H1 (cell line): ENCODE measurements at regions of chr12 and their contacts with region 1.

Region 1: DNA sequence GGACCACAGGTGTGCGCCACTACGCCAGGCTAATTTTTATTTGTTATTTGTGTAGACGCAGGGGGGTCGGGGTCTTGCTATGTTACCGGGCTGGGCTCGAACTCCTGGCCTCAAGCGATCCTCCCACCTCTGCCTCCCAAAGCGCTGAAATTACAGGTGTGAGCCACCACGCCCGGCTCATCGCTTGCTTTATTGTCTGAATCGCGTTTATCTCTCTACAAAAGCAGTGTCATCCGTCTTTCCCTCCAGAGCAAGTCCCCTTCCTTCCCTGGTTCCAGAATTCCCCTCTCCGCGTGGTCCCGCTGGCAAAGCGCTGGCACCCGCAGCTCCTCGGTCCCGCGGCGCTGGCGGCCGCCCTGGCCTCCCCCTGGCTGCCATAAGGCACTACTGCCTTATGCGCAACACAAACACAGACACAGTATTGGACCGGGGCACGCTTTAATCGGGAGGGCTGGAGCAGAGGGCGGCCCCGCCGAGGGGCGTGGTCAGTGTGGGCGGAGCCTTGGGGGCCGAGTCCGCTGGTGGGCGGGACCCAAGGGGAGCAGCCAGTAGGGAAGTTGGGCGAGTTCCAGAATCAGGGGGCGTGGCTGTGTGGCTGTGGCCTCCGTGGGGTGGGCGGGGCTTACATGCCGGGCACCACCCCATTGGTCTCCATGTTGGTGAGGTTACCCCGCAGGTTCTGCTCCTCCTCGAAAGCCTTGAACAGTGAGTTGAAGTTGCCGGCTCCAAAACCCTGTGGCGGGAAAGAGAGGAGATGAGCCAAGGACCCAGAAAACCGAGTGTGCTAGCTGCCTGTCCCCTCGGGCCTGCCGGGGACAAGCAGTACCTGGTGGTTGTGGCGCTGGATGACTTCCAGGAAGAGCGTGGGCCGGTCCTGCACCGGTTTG is 19.3 kb downstream of the HPD start:
- DNase-seq: peak; percentile 96 to 100
- H3K4me3 ChIP-seq: peak overlapping the region; percentile 65 to 87 (median 75)
- H3K27ac ChIP-seq: peak overlapping the region; percentile 75; the same call in 1 of the 2 replicates
- H3K4me1 ChIP-seq: no peaks in the 10 kb centered on the region; a peak in 2 of 7 replicates
- H3K27me3 ChIP-seq: no peaks in the 10 kb centered on the region
- CTCF ChIP-seq: peak; percentile 29 to 48 (median 40)
- EP300 ChIP-seq: no peak
- POLR2A ChIP-seq: peak; percentile 59 to 75
- RAD21 ChIP-seq: peak in 1 of 2 experiments; percentile 24; a peak in 1 of 4 replicates

Region 2: GRCh38 chr12:121476477-121476876 is 362.9 kb before region 1 on chr12:
- CTCF ChIA-PET with region 1: no interaction called
- POLR2A ChIA-PET with region 1: no interaction called
- DNase-seq: no peak
- H3K4me3 ChIP-seq: no peak overlapping the region
- H3K27ac ChIP-seq: no peak overlapping the region
- H3K4me1 ChIP-seq: peaks cover 0 to 3% (median 2%) of the 10 kb centered on the region in 4 experiments; a peak in 1 of 7 replicates
- H3K27me3 ChIP-seq: no peaks in the 10 kb centered on the region
- CTCF ChIP-seq: no peak
- EP300 ChIP-seq: no peak
- POLR2A ChIP-seq: no peak
- RAD21 ChIP-seq: no peak

Region 3: GRCh38 chr12:121802846-121803630 is 36.3 kb before region 1 on chr12:
- CTCF ChIA-PET with region 1: interaction called, 111 read pairs
- POLR2A ChIA-PET with region 1: interaction called, 51 read pairs
- DNase-seq: peak; percentile 70 to 88
- H3K4me3 ChIP-seq: peak overlapping the region; percentile 70 to 88 (median 81)
- H3K27ac ChIP-seq: peak overlapping the region; percentile 97
- H3K4me1 ChIP-seq: peaks cover 12 to 28% (median 21%) of the 10 kb centered on the region in 4 experiments
- H3K27me3 ChIP-seq: no peaks in the 10 kb centered on the region
- CTCF ChIP-seq: no peak
- EP300 ChIP-seq: no peak
- POLR2A ChIP-seq: peak in 1 of 2 experiments; percentile 97; a peak in 2 of 3 replicates
- RAD21 ChIP-seq: no peak

Region 4: DNA sequence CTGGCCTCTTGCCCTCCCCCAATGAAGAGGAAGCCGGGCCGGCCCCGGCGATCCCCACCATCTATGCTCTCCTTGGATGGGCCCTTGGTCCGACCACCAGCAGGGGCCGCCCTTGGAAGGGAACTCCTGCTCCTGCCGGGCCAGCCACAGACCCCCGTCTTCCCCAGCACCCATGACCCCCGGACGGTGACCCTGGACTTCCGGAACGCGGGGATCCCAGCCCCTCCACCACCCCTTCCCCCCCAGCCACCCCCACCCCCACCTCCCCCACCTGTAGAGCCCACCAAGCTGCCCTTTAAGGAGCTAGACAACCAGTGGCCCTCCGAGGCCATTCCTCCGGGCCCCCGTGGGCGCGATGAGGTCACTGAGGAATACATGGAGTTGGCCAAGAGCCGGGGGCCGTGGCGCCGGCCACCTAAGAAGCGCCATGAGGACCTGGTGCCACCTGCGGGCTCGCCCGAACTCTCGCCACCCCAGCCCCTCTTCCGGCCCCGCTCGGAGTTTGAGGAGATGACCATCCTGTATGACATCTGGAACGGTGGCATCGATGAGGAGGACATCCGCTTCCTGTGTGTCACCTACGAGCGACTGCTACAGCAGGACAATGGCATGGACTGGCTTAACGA is 16.1 kb before region 1 on chr12:
- CTCF ChIA-PET with region 1: interaction called, 12 read pairs
- POLR2A ChIA-PET with region 1: interaction called, 22 read pairs
- DNase-seq: no peak
- H3K4me3 ChIP-seq: no peak overlapping the region
- H3K27ac ChIP-seq: no peak overlapping the region
- H3K4me1 ChIP-seq: no peaks in the 10 kb centered on the region
- H3K27me3 ChIP-seq: no peaks in the 10 kb centered on the region
- CTCF ChIP-seq: peak; percentile 28 to 54 (median 37); a peak in 3 of 4 replicates
- EP300 ChIP-seq: no peak
- POLR2A ChIP-seq: no peak
- RAD21 ChIP-seq: peak; percentile 36 to 45; a peak in 3 of 4 replicates

Region 5: DNA sequence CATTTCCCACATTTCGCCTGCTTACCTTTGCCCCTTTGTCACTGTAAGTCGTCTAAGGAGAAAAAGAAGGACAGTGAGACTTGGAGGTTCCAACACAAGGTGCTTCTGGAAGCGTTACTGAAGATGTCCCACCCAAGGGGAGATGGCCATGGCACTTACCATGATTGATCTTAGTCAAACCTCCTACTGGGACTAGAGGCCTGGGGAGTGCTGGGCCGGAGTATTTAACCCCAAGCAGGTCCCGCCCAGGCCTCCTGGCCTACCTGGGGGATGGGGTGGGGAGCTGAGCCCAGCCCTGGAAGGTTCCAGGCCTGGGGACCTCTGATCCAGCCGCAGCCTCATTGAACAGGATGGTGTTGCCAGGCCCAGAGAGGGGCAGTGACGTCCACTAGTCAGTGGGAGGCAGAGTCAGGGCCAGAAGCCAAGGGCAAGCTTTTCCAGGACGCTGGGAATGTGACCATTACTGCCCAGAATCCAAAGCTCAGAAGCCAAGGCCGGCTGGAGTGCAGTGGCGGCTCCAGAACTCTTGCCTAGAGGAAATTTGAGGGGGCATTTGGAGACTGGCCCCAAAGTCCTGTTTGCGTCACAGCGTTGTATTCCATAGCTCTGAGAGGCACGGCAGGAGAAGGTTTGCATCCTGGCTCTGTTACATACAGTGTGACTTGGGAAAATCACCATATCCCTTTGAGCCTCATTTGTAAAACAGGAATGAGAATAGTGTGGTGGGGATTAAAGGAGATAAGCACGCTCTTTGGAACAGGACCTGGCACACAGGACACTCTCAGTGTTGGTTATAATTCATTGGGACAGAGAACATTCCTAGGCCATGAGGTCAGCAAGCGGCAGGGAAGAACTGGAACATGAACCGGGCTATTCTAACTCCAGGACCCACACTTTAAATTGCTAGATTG is 19.6 kb after region 1 on chr12 and contains the start of gene HPD:
- CTCF ChIA-PET with region 1: interaction called, 20 read pairs
- POLR2A ChIA-PET with region 1: interaction called, 5 read pairs
- DNase-seq: no peak
- H3K4me3 ChIP-seq: no peak within 1 kb of the TSS
- H3K27ac ChIP-seq: peak within 1 kb of the TSS; percentile 21; the same call in 1 of the 2 replicates
- H3K4me1 ChIP-seq: peaks cover 0 to 17% (median 11%) of the 10 kb centered on the region in 4 experiments; a peak in 5 of 7 replicates
- H3K27me3 ChIP-seq: no peaks in the 10 kb centered on the region; a peak in 1 of 7 replicates
- CTCF ChIP-seq: no peak
- EP300 ChIP-seq: no peak
- POLR2A ChIP-seq: no peak
- RAD21 ChIP-seq: no peak
- total RNA-seq, gene HPD: 0.38 and 0.56 TPM in 2 replicates